ENCODE measurements at regions of chr15 and their contacts with region 1.

Region 1: DNA sequence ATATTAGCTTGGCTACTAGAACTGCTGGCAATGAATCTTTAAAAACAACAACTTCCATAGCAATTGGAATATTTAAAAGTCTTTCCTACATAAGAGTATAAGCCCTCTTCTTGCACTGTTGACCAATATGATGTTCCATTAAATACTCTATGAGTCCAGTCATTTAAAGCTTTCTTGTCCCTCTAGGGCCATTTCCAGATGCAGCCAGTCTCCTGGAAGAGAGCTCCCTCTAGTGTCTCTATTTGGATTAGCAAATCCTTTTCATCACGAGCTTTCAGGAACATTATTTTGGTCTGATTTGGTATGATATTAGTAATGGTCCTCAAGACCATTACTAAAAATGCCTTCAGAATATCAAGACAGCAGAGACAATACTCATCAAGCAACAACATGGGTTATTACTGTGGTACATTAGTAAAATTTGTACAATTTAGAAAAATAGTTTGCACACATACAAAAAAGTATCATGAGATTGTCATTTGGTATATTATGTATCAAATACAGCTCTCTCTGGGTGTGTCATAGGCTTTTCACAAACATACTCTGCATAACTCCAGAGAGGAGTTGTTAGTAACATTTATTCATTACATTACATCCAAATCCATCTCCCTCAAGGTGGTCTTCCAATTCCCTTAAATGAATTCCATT is 101.3 kb downstream of the DPH6 start:
- DNase-seq: no peak
- H3K4me3 ChIP-seq: no peak overlapping the region
- CTCF ChIP-seq: peak; percentile 70

Region 2: DNA sequence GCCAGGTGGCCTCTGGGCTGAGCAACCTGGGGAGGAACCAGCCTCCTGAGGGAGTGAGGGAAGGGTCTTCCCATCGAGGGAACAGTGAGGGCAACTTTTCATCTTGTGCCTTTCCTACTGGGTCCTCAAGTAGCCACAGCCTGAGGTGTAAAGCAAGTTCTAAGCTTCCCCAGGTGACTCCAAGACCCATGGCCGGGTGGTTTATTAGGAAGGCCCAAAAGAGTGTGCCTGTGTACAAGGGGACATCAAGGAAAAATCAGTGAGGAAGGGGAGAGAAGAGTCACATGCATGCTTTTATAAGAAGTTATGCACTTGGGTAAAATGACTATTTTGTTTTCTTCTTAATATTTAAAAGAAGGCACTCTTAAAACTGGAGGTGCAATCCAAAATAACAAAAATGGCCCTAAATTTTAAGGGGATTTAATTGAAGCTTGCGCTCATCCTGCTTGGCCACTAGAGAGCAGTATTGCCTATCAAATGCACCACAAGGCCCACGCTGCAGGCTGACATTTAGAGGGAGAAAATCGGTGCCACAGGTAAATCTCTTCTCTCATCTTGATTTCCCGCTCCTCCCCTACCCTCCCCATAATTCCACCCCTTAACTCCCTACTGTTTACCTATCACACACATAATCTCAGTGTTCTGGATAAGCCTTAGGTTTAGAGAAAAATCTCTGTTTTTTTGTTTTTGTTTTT is 366.3 kb before region 1 on chr15:
- CTCF ChIA-PET with region 1: interaction called, 101 read pairs
- POLR2A ChIA-PET with region 1: no interaction called
- DNase-seq: peak; percentile 14
- H3K4me3 ChIP-seq: no peak overlapping the region
- CTCF ChIP-seq: peak; percentile 68

Region 3: DNA sequence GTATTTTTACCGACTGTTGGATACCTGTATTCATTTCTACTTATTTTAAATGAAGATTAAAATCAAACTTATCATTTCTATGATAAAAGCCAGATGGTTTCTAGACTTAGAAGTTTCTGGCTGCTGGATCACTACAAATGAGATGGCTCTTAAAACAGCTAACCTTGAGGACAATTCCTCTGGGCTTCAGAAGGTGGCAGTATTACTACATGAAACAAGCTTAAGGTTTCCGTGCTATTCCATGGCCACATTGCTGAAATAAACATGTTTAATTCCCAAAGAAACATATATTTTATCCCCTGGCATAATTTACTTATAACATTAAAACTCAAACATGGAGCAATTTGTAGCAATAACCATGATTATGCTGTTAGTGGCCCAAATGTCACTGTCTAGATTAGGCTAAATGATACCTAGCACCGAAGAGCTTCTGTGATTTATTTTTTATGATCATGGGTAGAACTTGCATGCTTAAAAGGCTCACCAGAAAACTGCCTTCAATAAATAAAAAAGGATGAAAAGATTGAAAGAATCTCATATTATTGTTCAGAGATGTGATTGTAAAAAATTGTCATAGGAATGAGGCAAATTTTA is 155.6 kb before region 1 on chr15:
- CTCF ChIA-PET with region 1: interaction called, 313 read pairs
- POLR2A ChIA-PET with region 1: no interaction called
- DNase-seq: no peak
- H3K4me3 ChIP-seq: no peak overlapping the region
- CTCF ChIP-seq: peak; percentile 71

Region 4: DNA sequence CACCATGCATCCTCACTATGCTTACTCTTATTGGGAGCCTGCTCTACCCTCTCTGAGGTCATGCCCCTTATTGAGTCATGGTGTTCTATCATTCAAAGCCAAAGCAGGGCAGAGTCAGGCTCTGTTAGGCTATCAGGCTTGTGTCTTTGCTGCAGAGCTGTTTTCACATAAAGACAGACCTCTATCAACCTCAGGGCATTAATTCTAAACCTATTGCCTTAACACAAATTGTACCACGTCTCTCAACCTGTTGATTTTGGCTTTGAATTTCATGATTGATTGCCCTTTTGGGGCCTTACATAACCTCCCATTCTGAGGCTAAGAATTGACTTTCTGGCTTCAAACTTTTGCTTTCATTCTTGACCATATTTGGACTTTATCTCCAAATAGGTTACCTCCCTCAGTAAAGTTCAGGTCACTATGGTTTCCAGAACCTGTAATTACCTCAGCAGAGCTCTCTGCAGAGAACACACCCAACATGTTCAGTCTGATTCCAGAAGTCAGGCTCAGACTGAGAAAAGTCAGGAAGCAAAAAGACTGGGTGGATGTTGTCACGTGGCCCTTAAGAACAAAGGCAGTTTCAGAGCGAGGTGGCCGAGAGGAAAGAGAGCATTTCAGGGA is 138.2 kb before region 1 on chr15:
- CTCF ChIA-PET with region 1: interaction called, 55 read pairs
- POLR2A ChIA-PET with region 1: no interaction called
- DNase-seq: no peak
- H3K4me3 ChIP-seq: no peak overlapping the region
- CTCF ChIP-seq: no peak

Region 5: DNA sequence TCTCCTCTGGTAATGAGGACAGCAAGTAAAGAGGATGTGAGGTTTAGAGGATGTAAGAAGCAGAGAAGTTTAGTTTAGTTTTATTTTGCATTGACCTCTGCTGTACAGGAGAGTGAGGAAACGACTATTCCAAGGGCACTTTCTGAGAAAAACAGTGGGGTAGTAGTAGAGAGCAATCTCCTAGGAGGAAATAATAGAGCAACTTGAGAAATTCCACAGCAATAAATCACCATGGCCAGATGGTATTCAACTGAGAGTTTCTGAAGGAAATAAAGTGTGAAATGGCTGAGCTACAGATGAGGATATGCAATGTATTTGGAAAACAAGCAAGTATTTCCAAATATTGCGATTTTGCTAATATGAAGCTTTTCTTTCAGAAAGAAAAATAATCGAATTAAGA is 17.6 kb before region 1 on chr15:
- CTCF ChIA-PET with region 1: interaction called, 55 read pairs
- POLR2A ChIA-PET with region 1: no interaction called
- DNase-seq: no peak
- H3K4me3 ChIP-seq: no peak overlapping the region
- CTCF ChIP-seq: no peak

Region 6: GRCh38 chr15:35529784-35530183 is 85.1 kb after region 1 on chr15:
- CTCF ChIA-PET with region 1: no interaction called
- POLR2A ChIA-PET with region 1: no interaction called
- DNase-seq: no peak
- H3K4me3 ChIP-seq: no peak overlapping the region
- CTCF ChIP-seq: no peak